HEK293 (cell line): ENCODE measurements at regions of chr17 and their contacts with region 1.

Region 1: GRCh38 chr17:56125830-56126819 is 27.1 kb upstream of the ANKFN1 start:
- H3K4me3 ChIP-seq: no peak overlapping the region
- H3K27ac ChIP-seq: no peak overlapping the region
- H3K4me1 ChIP-seq: no peaks in the 10 kb centered on the region; the same call in 1 of the 2 replicates
- CTCF ChIP-seq: no peak

Region 2: GRCh38 chr17:56141046-56141839 is 15.1 kb after region 1 on chr17:
- CTCF ChIA-PET with region 1: interaction called, 10 read pairs
- POLR2A ChIA-PET with region 1: no interaction called
- H3K4me3 ChIP-seq: no peak overlapping the region
- H3K27ac ChIP-seq: no peak overlapping the region
- H3K4me1 ChIP-seq: 0 out of 2 replicates have a peak, but pooled peaks cover 2% of the 10 kb centered on the region
- CTCF ChIP-seq: no peak

Region 3: GRCh38 chr17:56244268-56244890 is 118.3 kb after region 1 on chr17:
- CTCF ChIA-PET with region 1: no interaction called
- POLR2A ChIA-PET with region 1: no interaction called
- H3K4me3 ChIP-seq: no peak overlapping the region
- H3K27ac ChIP-seq: no peak overlapping the region
- H3K4me1 ChIP-seq: no peaks in the 10 kb centered on the region
- CTCF ChIP-seq: no peak

Region 4: GRCh38 chr17:56319517-56319916 is 193.4 kb after region 1 on chr17:
- CTCF ChIA-PET with region 1: interaction called, 11 read pairs
- POLR2A ChIA-PET with region 1: no interaction called
- H3K4me3 ChIP-seq: no peak overlapping the region
- H3K27ac ChIP-seq: no peak overlapping the region
- H3K4me1 ChIP-seq: no peaks in the 10 kb centered on the region
- CTCF ChIP-seq: no peak